Lower leg skin (tissue), 4 donors: ENCODE measurements at regions of chr5 and their contacts with region 1.

Region 1: GRCh38 chr5:40869384-40869783 is 28.2 kb downstream of the CARD6 start:
- DNase-seq: no peak
- H3K4me3 ChIP-seq: no peak overlapping the region
- CTCF ChIP-seq: no peak
- POLR2A ChIP-seq: no peak

Region 2: DNA sequence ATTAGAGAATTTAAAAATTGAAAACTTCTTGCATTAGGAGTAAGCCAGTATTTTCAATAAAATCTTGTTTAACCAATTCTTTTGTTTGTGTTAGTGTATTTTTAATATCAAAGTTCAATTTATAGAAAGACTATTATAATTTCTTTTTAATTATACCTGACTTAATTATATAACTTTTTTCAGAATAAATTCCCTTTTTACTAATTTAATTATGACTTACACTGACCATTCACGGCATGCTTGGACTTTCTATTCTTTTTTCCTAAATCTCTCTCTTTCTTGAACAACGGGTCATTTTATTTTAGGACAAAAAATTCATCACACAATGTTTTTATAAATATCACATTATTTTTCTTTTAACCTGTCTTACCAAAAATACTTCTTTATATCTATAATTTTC is 745.0 kb before region 1 on chr5:
- intact Hi-C with region 1: no loop called
- DNase-seq: no peak
- H3K4me3 ChIP-seq: no peak overlapping the region
- CTCF ChIP-seq: no peak
- POLR2A ChIP-seq: no peak

Region 3: DNA sequence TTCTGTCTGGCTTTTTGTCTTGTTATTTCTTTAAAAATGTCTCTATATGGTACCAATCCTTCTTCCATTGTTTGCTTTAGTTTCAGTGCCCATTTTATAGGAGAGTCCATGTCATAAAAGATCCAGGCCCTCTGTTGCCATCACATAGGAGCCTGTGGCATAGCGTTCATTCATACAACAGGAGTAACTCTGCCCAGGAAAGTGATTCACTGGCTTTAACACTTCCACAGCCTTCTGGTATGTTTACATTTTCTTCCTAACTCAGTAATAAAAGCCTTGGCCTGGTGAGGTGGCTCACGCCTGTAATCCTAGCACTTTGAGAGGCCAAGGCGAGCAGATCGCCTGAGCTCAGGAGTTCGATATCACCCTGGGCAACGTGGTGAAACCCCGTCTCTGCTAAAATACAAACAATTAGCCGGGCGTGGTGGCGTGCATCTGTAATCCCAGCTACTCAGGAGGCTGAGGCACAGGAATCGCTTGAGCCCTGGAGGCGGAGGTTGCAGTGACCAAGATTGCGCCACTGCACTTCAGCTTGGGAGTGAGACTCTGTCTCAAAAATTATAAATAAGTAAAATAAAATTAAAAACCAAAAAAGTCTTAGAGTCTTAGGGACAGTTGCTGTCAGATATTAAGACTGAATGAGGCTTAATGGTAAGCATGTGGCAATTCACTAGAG is 708.8 kb before region 1 on chr5:
- intact Hi-C with region 1: no loop called
- DNase-seq: no peak
- H3K4me3 ChIP-seq: no peak overlapping the region
- CTCF ChIP-seq: no peak
- POLR2A ChIP-seq: no peak

Region 4: GRCh38 chr5:40755407-40756365 is 113.7 kb before region 1 on chr5 and contains the start of gene TTC33:
- intact Hi-C with region 1: loop called (anchors 10 kb)
- DNase-seq: peak; percentile 95 to 99
- H3K4me3 ChIP-seq: peak within 1 kb of the TSS; percentile 93
- CTCF ChIP-seq: peak in 1 of 3 donors; percentile 19
- POLR2A ChIP-seq: no peak
- total RNA-seq, gene TTC33: 8.7 to 13.1 (median 11.0) TPM